Activated CD4-positive, alpha-beta memory T cell treated with anti-CD3 and anti-CD28 coated beads for 36 hours (primary cell): ENCODE measurements at regions of chr12 and their contacts with region 1.

Region 1: DNA sequence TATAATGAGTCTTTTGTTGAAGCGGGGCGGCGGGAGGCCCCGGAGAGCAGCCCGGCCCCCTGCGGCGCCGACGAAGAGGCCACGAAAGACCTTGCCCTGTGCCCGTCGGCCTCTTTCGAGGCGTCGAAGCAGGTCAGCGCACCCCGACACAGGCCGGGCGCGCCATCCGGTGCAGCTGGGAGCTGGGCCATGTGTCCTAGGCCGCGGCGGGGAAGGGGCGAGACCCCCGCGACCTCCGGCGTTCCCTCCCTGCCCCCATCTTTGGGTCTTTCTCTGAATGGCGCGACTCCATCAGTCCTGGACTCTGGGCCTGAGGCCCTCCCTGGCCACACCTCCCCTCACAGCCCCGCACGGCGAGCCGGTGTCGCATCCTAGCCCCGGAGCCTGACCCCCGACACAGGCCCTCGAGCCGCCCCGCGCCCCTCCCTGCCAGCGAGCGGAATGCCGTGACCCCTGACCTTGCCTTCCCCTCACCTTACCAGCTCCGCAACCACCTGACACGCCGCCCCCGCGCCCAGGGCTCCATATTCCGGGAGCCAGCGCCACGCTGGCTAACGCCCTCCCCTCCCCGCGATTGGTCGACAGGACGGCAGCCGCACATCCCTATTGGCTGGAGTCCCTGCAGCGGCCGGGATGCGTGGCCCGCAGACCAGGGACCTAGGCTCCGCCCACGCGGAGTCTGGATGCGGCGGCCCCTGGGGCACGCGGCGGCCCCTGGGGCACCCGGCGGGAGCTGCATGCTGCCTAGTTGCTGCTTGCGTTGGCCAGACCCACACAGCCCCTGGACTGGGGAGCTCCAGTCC is at the start of gene SLC11A2:
- DNase-seq: peak; percentile 97
- H3K4me3 Mint-ChIP-seq: peak within 1 kb of the TSS; percentile 95
- H3K27ac Mint-ChIP-seq: peak within 1 kb of the TSS; percentile 99
- H3K4me1 Mint-ChIP-seq: peaks cover 48% of the 10 kb centered on the region
- H3K27me3 Mint-ChIP-seq: peaks cover 4% of the 10 kb centered on the region
- total RNA-seq, gene SLC11A2: 41.4 to 41.6 TPM

Region 2: GRCh38 chr12:50504798-50505385 is 521.1 kb before region 1 on chr12 and contains the start of gene DIP2B:
- CTCF ChIA-PET with region 1: no interaction called
- POLR2A ChIA-PET with region 1: no interaction called
- intact Hi-C with region 1: loop called (anchors 10 kb)
- DNase-seq: peak; percentile 96
- H3K4me3 Mint-ChIP-seq: peak within 1 kb of the TSS; percentile 99
- H3K27ac Mint-ChIP-seq: peak within 1 kb of the TSS; percentile 93
- H3K4me1 Mint-ChIP-seq: peaks cover 42% of the 10 kb centered on the region
- H3K27me3 Mint-ChIP-seq: no peaks in the 10 kb centered on the region
- total RNA-seq, gene DIP2B: 23.3 to 23.7 TPM

Region 3: GRCh38 chr12:50825372-50825838 is 200.6 kb before region 1 on chr12:
- CTCF ChIA-PET with region 1: interaction called, 49 read pairs
- POLR2A ChIA-PET with region 1: interaction called, 3 read pairs
- intact Hi-C with region 1: loop called (anchors 1 kb)
- DNase-seq: no peak
- H3K4me3 Mint-ChIP-seq: no peak overlapping the region
- H3K27ac Mint-ChIP-seq: no peak overlapping the region
- H3K4me1 Mint-ChIP-seq: peaks cover 5% of the 10 kb centered on the region
- H3K27me3 Mint-ChIP-seq: no peaks in the 10 kb centered on the region

Region 4: GRCh38 chr12:50979369-50980052 is 46.5 kb before region 1 on chr12:
- CTCF ChIA-PET with region 1: interaction called, 17 read pairs
- POLR2A ChIA-PET with region 1: interaction called, 20 read pairs
- intact Hi-C with region 1: no loop called
- DNase-seq: peak; percentile 72
- H3K4me3 Mint-ChIP-seq: peak overlapping the region; percentile 48
- H3K27ac Mint-ChIP-seq: peak overlapping the region; percentile 89
- H3K4me1 Mint-ChIP-seq: peaks cover 26% of the 10 kb centered on the region
- H3K27me3 Mint-ChIP-seq: no peaks in the 10 kb centered on the region

Region 5: GRCh38 chr12:51009056-51009440 is 17.0 kb before region 1 on chr12:
- CTCF ChIA-PET with region 1: interaction called, 7 read pairs
- POLR2A ChIA-PET with region 1: interaction called, 47 read pairs
- intact Hi-C with region 1: loop called (anchors 1 kb)
- DNase-seq: peak; percentile 74
- H3K4me3 Mint-ChIP-seq: peak overlapping the region; percentile 40
- H3K27ac Mint-ChIP-seq: peak overlapping the region; percentile 59
- H3K4me1 Mint-ChIP-seq: peaks cover 45% of the 10 kb centered on the region
- H3K27me3 Mint-ChIP-seq: no peaks in the 10 kb centered on the region

Region 6: GRCh38 chr12:51083126-51083833 is 57.2 kb after region 1 on chr12 and contains the start of gene CSRNP2:
- CTCF ChIA-PET with region 1: no interaction called
- POLR2A ChIA-PET with region 1: interaction called, 8 read pairs
- intact Hi-C with region 1: loop called (anchors 1 kb)
- DNase-seq: peak; percentile 97
- H3K4me3 Mint-ChIP-seq: peak within 1 kb of the TSS; percentile 91
- H3K27ac Mint-ChIP-seq: peak within 1 kb of the TSS; percentile 83
- H3K4me1 Mint-ChIP-seq: peaks cover 46% of the 10 kb centered on the region
- H3K27me3 Mint-ChIP-seq: no peaks in the 10 kb centered on the region
- total RNA-seq, gene CSRNP2: 19.2 to 20.2 TPM

Region 7: GRCh38 chr12:51326762-51327439 is 300.9 kb after region 1 on chr12:
- CTCF ChIA-PET with region 1: interaction called, 4 read pairs
- POLR2A ChIA-PET with region 1: interaction called, 3 read pairs
- intact Hi-C with region 1: loop called (anchors 5 kb)
- DNase-seq: no peak
- H3K4me3 Mint-ChIP-seq: peak overlapping the region; percentile 52
- H3K27ac Mint-ChIP-seq: peak overlapping the region; percentile 90
- H3K4me1 Mint-ChIP-seq: peaks cover 64% of the 10 kb centered on the region
- H3K27me3 Mint-ChIP-seq: no peaks in the 10 kb centered on the region

Region 8: DNA sequence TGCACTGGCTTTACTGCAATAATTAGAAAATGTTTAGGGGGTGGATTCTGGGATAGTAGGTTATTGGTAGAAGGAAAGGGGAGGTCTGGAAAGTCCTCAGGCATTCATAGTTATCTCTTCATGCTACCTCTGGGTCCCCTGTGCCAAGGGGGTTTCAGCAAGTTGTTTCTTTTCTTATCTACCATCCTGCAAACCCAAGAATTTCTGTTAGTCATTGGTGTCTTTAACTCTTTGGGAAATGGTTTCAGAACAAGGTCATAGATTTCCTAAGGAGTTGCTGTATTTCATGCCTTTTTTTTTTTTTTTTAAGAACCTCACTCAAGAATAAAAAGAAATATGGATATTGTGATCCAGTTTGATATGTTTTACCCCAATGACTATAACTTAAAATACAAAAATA is 462.2 kb after region 1 on chr12:
- CTCF ChIA-PET with region 1: no interaction called
- POLR2A ChIA-PET with region 1: no interaction called
- intact Hi-C with region 1: no loop called
- DNase-seq: no peak
- H3K4me3 Mint-ChIP-seq: no peak overlapping the region
- H3K27ac Mint-ChIP-seq: no peak overlapping the region
- H3K4me1 Mint-ChIP-seq: peaks cover 13% of the 10 kb centered on the region
- H3K27me3 Mint-ChIP-seq: no peaks in the 10 kb centered on the region